ENCODE measurements at regions of chr6 and their contacts with region 1.

Region 1: GRCh38 chr6:20291764-20292580 is 79.7 kb upstream of the MBOAT1 start:
- DNase-seq: peak; percentile 81 to 95 (median 86)
- ATAC-seq: peak; percentile 97
- H3K4me3 ChIP-seq: no peak overlapping the region
- H3K27ac ChIP-seq: peak overlapping the region; percentile 11; the same call in 2 of the 3 replicates
- H3K4me1 ChIP-seq: peaks cover 0 to 5% of the 10 kb centered on the region in 2 experiments; a peak in 2 of 5 replicates
- H3K27me3 ChIP-seq: no peaks in the 10 kb centered on the region
- CTCF ChIP-seq: peak; percentile 87 to 93 (median 93)
- EP300 ChIP-seq: peak; percentile 26; the same call in 1 of the 2 replicates
- POLR2A ChIP-seq: no peak
- RAD21 ChIP-seq: peak; percentile 98 to 99

Region 2: GRCh38 chr6:20092071-20092566 is 199.9 kb before region 1 on chr6:
- CTCF ChIA-PET with region 1: no interaction called
- POLR2A ChIA-PET with region 1: no interaction called
- in situ Hi-C with region 1: no loop called
- intact Hi-C with region 1: loop called (anchors 1 kb)
- DNase-seq: peak; percentile 39 to 69 (median 44)
- ATAC-seq: peak; percentile 66
- H3K4me3 ChIP-seq: no peak overlapping the region
- H3K27ac ChIP-seq: no peak overlapping the region
- H3K4me1 ChIP-seq: no peaks in the 10 kb centered on the region
- H3K27me3 ChIP-seq: no peaks in the 10 kb centered on the region
- CTCF ChIP-seq: peak; percentile 59 to 85 (median 69); a peak in 5 of 6 replicates
- EP300 ChIP-seq: no peak
- POLR2A ChIP-seq: no peak
- RAD21 ChIP-seq: peak; percentile 83 to 95

Region 3: GRCh38 chr6:20279608-20280287 is 12.2 kb before region 1 on chr6:
- CTCF ChIA-PET with region 1: no interaction called
- POLR2A ChIA-PET with region 1: interaction called, 18 read pairs
- in situ Hi-C with region 1: no loop called
- intact Hi-C with region 1: no loop called
- DNase-seq: no peak
- ATAC-seq: peak; percentile 41
- H3K4me3 ChIP-seq: no peak overlapping the region
- H3K27ac ChIP-seq: no peak overlapping the region
- H3K4me1 ChIP-seq: peaks cover 0 to 11% of the 10 kb centered on the region in 2 experiments; a peak in 3 of 5 replicates
- H3K27me3 ChIP-seq: no peaks in the 10 kb centered on the region
- CTCF ChIP-seq: no peak
- EP300 ChIP-seq: no peak
- POLR2A ChIP-seq: no peak
- RAD21 ChIP-seq: no peak

Region 4: GRCh38 chr6:20312606-20313005 is 20.6 kb after region 1 on chr6:
- CTCF ChIA-PET with region 1: no interaction called
- POLR2A ChIA-PET with region 1: no interaction called
- in situ Hi-C with region 1: no loop called
- intact Hi-C with region 1: no loop called
- DNase-seq: no peak
- ATAC-seq: no peak
- H3K4me3 ChIP-seq: no peak overlapping the region
- H3K27ac ChIP-seq: no peak overlapping the region
- H3K4me1 ChIP-seq: no peaks in the 10 kb centered on the region
- H3K27me3 ChIP-seq: no peaks in the 10 kb centered on the region
- CTCF ChIP-seq: no peak
- EP300 ChIP-seq: no peak
- POLR2A ChIP-seq: no peak
- RAD21 ChIP-seq: no peak

Region 5: GRCh38 chr6:20401205-20402091 is 109.5 kb after region 1 on chr6 and contains the start of gene E2F3:
- CTCF ChIA-PET with region 1: no interaction called
- POLR2A ChIA-PET with region 1: interaction called, 4 read pairs
- in situ Hi-C with region 1: no loop called
- intact Hi-C with region 1: loop called (anchors 1 kb)
- DNase-seq: peak; percentile 98 to 100 (median 98)
- ATAC-seq: peak; percentile 84
- H3K4me3 ChIP-seq: peak within 1 kb of the TSS; percentile 60
- H3K27ac ChIP-seq: peak within 1 kb of the TSS; percentile 95
- H3K4me1 ChIP-seq: peaks cover 12 to 19% of the 10 kb centered on the region in 2 experiments
- H3K27me3 ChIP-seq: no peaks in the 10 kb centered on the region
- CTCF ChIP-seq: no peak
- EP300 ChIP-seq: no peak
- POLR2A ChIP-seq: peak; percentile 99
- RAD21 ChIP-seq: peak; percentile 19 to 20; a peak in 2 of 4 replicates
- polyA plus RNA-seq, gene E2F3: 11.8 to 14.8 TPM

Region 6: DNA sequence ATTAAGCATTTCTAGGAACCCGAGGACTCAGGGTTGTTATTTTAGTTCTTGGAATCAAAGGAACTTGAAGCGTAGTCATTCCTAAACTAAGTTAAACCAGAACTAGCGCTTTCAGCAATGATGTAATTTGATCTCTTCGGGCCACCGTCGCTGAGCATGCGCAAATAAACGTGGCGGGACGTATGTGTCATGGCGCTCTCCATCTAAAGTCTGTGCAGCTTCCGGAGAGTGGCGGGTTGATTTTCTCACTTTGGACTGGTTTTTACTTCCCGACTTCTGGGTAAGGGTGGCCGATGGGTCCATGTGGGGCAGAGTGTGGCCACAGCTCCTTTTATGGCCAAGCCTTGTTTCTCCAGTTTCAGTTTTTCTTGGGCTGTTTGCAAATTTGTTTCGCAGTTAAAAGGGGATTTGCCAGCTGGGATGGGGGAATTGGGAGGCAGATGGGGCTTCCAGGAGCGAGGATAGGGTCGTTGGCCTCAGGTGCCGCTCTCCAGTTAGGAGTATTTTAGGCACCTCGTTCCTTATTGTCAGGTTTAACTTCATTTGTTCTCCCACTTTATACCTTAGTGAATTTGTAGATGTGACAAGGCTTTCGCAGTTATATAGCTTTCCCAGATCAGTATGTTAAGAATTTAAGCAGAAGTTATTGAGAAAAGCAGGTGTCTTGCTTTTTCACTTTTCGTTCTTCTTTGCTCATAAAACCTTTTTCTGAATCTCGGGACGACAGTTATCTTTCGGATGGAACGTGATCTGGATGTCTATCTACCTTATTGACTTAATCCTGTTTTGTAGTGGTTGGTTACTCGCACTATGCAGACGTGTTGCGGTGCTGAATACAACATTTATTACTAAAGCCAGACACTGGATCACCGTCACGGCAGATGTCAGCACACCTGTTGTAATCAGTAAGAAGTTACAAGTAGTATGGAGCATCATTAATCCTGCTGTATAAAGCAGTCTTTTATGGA is 242.6 kb after region 1 on chr6 and contains the start of gene CDKAL1:
- CTCF ChIA-PET with region 1: interaction called, 45 read pairs
- POLR2A ChIA-PET with region 1: interaction called, 5 read pairs
- in situ Hi-C with region 1: loop called (anchors 5 kb)
- intact Hi-C with region 1: loop called (anchors 1 kb)
- DNase-seq: peak; percentile 81 to 98 (median 86)
- ATAC-seq: peak; percentile 91
- H3K4me3 ChIP-seq: peak within 1 kb of the TSS; percentile 88
- H3K27ac ChIP-seq: peak within 1 kb of the TSS; percentile 93
- H3K4me1 ChIP-seq: peaks cover 7 to 16% of the 10 kb centered on the region in 2 experiments; a peak in 3 of 5 replicates
- H3K27me3 ChIP-seq: no peaks in the 10 kb centered on the region
- CTCF ChIP-seq: no peak
- EP300 ChIP-seq: peak; percentile 46; the same call in 1 of the 2 replicates
- POLR2A ChIP-seq: peak; percentile 93
- RAD21 ChIP-seq: no peak
- polyA plus RNA-seq, gene CDKAL1: 15.5 to 16.4 TPM

Measured in K562 (cell line).